Colonic mucosa (tissue), 4 donors: ENCODE measurements at regions of chr6 and their contacts with region 1.

Region 1: GRCh38 chr6:155248008-155249001 is 15.5 kb upstream of the CLDN20 start:
- DNase-seq: peak; percentile 31
- H3K4me3 ChIP-seq: no peak overlapping the region
- H3K27ac ChIP-seq: no peak overlapping the region
- H3K4me1 ChIP-seq: no peaks in the 10 kb centered on the region
- H3K27me3 ChIP-seq: no peaks in the 10 kb centered on the region
- CTCF ChIP-seq: peak; percentile 52

Region 2: GRCh38 chr6:154928325-154928922 is 319.9 kb before region 1 on chr6:
- intact Hi-C with region 1: loop called (anchors 5 kb)
- DNase-seq: peak; percentile 70
- H3K4me3 ChIP-seq: no peak overlapping the region
- H3K27ac ChIP-seq: no peak overlapping the region
- H3K4me1 ChIP-seq: no peaks in the 10 kb centered on the region
- H3K27me3 ChIP-seq: no peaks in the 10 kb centered on the region
- CTCF ChIP-seq: peak; percentile 54

Region 3: DNA sequence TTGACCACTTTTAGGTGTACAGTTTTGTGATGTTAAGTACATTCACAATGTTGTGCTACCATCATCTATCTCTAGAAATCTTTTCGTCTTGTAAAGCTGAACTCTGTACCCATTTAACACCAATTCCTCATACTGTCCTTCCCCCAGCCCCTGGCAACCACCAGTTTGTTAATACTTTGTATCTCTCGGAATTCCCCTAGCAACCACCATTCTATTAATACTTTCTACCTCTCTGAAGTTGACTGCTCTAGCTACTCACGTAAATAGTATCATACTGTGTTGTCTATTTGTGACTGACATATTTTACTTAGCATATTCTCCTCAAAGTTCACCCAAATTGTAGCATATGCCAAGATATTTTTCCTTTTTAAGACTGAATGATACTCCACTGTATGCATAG is 66.8 kb before region 1 on chr6:
- intact Hi-C with region 1: loop called (anchors 5 kb)
- DNase-seq: no peak
- H3K4me3 ChIP-seq: no peak overlapping the region
- H3K27ac ChIP-seq: no peak overlapping the region
- H3K4me1 ChIP-seq: no peaks in the 10 kb centered on the region
- H3K27me3 ChIP-seq: no peaks in the 10 kb centered on the region
- CTCF ChIP-seq: no peak